HEK293 (cell line): ENCODE measurements at regions of chr19 and their contacts with region 1.

Region 1: GRCh38 chr19:10000171-10000826 is 10.0 kb downstream of the COL5A3 start:
- H3K4me3 ChIP-seq: no peak overlapping the region
- H3K27ac ChIP-seq: no peak overlapping the region
- H3K4me1 ChIP-seq: no peaks in the 10 kb centered on the region
- CTCF ChIP-seq: peak; percentile 66

Region 2: GRCh38 chr19:9934132-9934950 is 66.0 kb before region 1 on chr19:
- CTCF ChIA-PET with region 1: interaction called, 29 read pairs
- POLR2A ChIA-PET with region 1: no interaction called
- H3K4me3 ChIP-seq: no peak overlapping the region
- H3K27ac ChIP-seq: no peak overlapping the region
- H3K4me1 ChIP-seq: peaks cover 6% of the 10 kb centered on the region; the same call in 1 of the 2 replicates
- CTCF ChIP-seq: peak; percentile 86

Region 3: GRCh38 chr19:9939301-9939913 is 60.9 kb before region 1 on chr19:
- CTCF ChIA-PET with region 1: interaction called, 10 read pairs
- POLR2A ChIA-PET with region 1: no interaction called
- H3K4me3 ChIP-seq: no peak overlapping the region
- H3K27ac ChIP-seq: no peak overlapping the region
- H3K4me1 ChIP-seq: peaks cover 4% of the 10 kb centered on the region; the same call in 1 of the 2 replicates
- CTCF ChIP-seq: no peak

Region 4: DNA sequence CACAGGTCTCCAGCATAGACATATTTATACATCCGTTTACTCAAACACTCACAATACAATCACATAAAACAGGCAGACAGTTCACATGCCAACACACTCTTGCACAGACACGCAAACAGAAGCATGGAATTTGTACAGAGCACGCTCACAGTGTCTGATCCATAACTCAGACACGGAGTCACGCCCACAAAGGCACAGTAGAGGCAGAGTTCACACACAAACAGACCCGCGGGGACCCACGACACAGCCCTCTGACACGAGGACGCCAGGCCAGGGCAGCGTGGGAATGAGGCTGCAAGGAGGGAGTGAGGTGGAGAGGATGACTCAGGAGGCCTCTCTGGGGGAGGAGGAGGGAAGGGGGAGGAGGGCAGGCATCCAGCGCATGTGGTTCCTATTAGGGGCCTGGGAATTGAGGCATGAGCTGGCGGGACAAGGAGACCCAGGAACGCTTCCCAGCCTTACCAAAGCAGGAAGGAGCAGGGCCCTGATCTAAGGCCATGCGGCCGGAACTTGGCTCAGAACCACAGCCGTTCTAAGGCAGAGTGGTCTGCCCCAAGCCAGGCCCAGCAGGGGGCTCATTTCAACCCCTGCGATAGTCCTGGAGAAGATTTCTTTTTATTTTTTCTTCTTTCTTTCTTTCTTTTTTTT is 54.9 kb before region 1 on chr19:
- CTCF ChIA-PET with region 1: interaction called, 10 read pairs
- POLR2A ChIA-PET with region 1: no interaction called
- H3K4me3 ChIP-seq: no peak overlapping the region
- H3K27ac ChIP-seq: no peak overlapping the region
- H3K4me1 ChIP-seq: no peaks in the 10 kb centered on the region
- CTCF ChIP-seq: no peak

Region 5: DNA sequence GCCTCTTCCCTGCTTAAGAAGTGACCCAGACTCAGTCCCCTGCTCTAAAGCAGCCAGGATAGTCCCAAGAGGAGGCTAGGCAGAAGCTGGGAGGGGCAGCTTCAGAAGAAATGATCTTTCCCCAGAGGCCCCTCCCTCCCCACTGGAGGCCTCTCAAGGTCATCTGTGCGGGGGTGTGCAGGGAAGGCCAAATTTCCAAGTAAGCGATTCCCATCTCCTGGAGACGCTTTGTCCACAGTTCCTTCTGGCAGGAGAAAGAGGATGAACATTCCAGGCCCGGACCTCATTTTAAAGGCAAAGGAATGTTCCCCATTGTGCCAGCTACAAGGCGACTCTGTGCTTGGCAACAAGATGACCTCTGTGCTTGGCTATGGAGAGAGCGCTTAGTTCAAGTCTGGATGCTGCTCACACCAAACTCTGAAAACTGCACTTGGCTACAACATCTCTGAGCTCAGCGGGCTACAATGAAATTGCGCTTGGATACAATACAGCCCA is 13.5 kb before region 1 on chr19:
- CTCF ChIA-PET with region 1: interaction called, 51 read pairs
- POLR2A ChIA-PET with region 1: interaction called, 9 read pairs
- H3K4me3 ChIP-seq: no peak overlapping the region
- H3K27ac ChIP-seq: no peak overlapping the region
- H3K4me1 ChIP-seq: no peaks in the 10 kb centered on the region
- CTCF ChIP-seq: no peak

Region 6: GRCh38 chr19:10027158-10027693 is 26.9 kb after region 1 on chr19:
- CTCF ChIA-PET with region 1: interaction called, 22 read pairs
- POLR2A ChIA-PET with region 1: no interaction called
- H3K4me3 ChIP-seq: no peak overlapping the region
- H3K27ac ChIP-seq: no peak overlapping the region
- H3K4me1 ChIP-seq: peaks cover 5% of the 10 kb centered on the region; the same call in 1 of the 2 replicates
- CTCF ChIP-seq: no peak

Region 7: DNA sequence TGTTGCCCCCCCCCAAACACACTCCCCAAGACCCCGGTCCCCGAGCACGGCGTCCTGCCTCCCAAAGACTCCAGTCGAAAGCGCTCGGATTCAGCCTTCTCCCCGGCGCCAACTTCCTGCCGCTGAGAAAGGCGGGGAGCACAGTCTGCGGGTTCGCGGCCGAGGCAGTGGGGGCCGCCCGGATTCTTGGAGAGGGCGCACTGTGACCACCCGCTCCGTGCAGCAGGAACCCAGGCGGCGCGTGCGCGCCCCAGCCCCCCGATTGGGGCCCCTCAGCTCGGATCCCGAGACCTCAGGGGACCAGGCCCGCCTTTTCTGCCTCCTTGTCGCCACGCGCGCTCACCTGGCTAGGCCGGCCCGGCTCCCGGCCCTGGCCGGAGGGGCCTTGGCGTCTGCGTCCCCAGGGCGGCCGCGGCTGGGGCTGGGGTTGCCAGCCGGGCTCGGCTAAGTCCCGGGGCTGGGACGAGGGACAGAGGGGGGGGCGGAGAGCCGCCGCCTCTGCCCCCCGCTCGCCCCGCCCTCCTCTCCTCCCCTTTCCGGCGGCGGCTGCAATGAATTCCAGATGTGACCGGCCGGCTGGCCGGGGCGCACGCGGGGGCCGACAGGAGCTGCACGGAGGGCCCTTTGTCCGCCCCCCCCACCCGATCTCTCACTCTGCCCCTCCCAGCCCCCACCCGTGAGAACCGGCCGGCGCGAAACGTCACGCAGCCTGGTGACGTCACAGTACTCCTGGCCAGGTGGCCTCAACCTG is 230.7 kb after region 1 on chr19 and contains the start of gene S1PR2:
- CTCF ChIA-PET with region 1: no interaction called
- POLR2A ChIA-PET with region 1: no interaction called
- H3K4me3 ChIP-seq: peak within 1 kb of the TSS; percentile 78
- H3K27ac ChIP-seq: peak within 1 kb of the TSS; percentile 74; the same call in 1 of the 2 replicates
- H3K4me1 ChIP-seq: no peaks in the 10 kb centered on the region
- CTCF ChIP-seq: no peak